H1 (cell line): ENCODE measurements at regions of chr1 and their contacts with region 1.

Region 1: DNA sequence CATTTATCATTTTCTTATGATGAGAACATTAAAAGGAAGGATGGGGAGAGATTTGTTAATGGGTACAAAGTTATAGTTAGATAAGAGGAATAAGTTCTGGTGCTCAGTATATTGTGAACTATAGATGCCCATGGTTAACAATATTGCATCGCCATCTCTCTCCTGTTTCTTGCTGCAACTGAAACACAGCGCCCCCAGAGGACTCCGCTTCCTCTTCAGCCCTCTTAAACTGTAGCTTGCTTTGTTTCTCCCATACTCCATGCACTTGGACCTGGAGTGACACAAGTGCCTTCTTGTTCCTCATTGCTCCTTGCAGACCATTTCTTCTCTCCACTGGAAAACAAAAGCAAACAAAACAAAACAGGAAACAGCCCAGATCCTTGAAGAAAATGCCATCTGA is 70.1 kb upstream of the NTPCR start:
- DNase-seq: peak; percentile 25 to 65
- H3K4me3 ChIP-seq: no peak overlapping the region
- H3K27ac ChIP-seq: no peak overlapping the region
- H3K4me1 ChIP-seq: no peaks in the 10 kb centered on the region
- H3K27me3 ChIP-seq: no peaks in the 10 kb centered on the region; a peak in 1 of 7 replicates
- CTCF ChIP-seq: peak; percentile 63 to 89 (median 70)
- EP300 ChIP-seq: no peak
- POLR2A ChIP-seq: no peak
- RAD21 ChIP-seq: peak; percentile 50 to 61

Region 2: DNA sequence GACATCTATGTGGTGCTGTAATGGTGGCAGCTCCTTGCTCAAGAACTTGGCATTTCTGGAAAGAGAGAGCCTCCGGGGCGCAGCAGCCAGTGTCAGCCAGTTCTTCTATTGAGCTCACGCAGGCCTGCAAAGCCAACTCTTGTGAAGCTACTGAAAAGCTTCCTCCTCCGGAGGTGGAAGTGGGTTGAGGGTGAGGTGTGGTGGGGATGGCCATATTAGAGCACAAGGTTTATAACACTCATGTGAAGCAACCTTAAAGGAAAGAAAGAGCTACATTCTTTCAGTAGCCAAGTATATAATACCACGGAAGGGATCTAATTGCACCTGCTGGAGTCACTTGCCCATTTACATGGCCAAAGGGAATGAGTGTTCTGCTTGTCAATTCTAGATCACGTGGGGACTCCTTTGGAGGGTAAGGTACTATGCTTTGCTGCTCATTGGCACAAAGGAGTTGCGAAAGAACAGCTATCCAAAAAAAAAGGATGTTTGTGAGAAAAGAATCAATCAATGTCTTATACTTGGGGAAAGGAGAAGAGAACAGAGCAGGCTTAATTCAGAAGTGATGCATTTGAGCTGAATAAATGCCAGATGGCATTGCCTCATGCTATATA is 93.4 kb before region 1 on chr1:
- CTCF ChIA-PET with region 1: no interaction called
- POLR2A ChIA-PET with region 1: no interaction called
- DNase-seq: no peak
- H3K4me3 ChIP-seq: no peak overlapping the region
- H3K27ac ChIP-seq: no peak overlapping the region
- H3K4me1 ChIP-seq: no peaks in the 10 kb centered on the region
- H3K27me3 ChIP-seq: no peaks in the 10 kb centered on the region
- CTCF ChIP-seq: no peak
- EP300 ChIP-seq: no peak
- POLR2A ChIP-seq: no peak
- RAD21 ChIP-seq: no peak

Region 3: DNA sequence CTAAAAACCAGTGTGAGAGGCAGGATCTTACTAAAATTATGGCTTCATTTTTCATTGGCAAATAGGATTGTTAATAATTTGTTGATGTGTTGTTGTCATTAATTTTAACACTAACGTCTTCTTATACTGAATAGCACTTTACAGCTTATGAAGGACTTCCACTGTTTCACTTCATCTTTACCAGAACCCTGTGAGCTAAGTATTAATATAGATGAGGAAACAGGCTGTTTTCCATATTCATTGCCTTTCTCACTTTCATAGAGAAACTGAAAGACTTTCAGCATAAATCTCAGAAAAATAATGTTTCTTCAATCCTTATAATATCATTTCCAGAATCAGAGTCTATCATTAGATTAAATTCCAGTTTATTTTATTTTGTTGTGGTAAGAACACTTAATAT is 66.6 kb before region 1 on chr1:
- CTCF ChIA-PET with region 1: interaction called, 12 read pairs
- POLR2A ChIA-PET with region 1: no interaction called
- DNase-seq: no peak
- H3K4me3 ChIP-seq: no peak overlapping the region
- H3K27ac ChIP-seq: no peak overlapping the region
- H3K4me1 ChIP-seq: no peaks in the 10 kb centered on the region
- H3K27me3 ChIP-seq: no peaks in the 10 kb centered on the region
- CTCF ChIP-seq: no peak
- EP300 ChIP-seq: no peak
- POLR2A ChIP-seq: no peak
- RAD21 ChIP-seq: no peak

Region 4: DNA sequence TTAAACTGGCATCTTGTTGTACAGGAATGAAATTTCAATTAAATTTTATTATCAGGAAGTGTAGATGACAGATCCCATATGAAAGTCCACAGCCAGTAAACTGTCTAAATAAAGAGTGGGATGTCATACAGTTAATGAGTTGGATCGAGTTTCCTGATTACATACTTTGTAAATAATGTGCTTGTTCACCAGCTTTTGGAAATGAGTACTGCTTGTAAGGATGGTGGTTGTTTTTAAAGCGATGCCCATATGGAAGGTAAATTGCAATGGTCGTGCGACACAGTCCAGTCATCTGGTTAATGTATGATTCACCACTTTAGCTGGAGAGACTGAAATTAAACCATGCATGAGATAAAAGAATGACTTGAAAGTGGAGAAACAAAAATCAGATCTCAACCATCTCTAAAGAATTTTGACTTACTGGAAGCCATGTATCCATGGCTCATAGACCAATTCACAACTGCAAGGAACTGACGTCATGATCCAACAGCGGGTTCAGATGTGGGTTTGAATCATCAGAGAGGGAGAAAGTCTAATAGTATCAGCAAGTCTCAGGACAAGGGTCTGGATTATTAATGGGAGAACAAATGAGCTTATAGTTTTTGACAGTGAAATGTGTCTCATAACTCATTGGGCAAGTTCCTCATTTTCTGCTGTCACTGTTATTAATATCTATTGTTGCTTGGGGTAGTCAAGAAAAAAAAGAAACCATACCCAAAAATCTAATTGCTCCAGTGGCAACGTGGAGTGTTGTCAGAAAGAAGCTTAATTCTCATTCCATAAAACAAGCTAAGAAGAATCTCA is 26.2 kb before region 1 on chr1:
- CTCF ChIA-PET with region 1: interaction called, 24 read pairs
- POLR2A ChIA-PET with region 1: no interaction called
- DNase-seq: no peak
- H3K4me3 ChIP-seq: no peak overlapping the region
- H3K27ac ChIP-seq: no peak overlapping the region
- H3K4me1 ChIP-seq: no peaks in the 10 kb centered on the region
- H3K27me3 ChIP-seq: peaks cover 0 to 1% (median 0%) of the 10 kb centered on the region in 4 experiments; a peak in 1 of 7 replicates
- CTCF ChIP-seq: no peak
- EP300 ChIP-seq: no peak
- POLR2A ChIP-seq: no peak
- RAD21 ChIP-seq: no peak

Region 5: DNA sequence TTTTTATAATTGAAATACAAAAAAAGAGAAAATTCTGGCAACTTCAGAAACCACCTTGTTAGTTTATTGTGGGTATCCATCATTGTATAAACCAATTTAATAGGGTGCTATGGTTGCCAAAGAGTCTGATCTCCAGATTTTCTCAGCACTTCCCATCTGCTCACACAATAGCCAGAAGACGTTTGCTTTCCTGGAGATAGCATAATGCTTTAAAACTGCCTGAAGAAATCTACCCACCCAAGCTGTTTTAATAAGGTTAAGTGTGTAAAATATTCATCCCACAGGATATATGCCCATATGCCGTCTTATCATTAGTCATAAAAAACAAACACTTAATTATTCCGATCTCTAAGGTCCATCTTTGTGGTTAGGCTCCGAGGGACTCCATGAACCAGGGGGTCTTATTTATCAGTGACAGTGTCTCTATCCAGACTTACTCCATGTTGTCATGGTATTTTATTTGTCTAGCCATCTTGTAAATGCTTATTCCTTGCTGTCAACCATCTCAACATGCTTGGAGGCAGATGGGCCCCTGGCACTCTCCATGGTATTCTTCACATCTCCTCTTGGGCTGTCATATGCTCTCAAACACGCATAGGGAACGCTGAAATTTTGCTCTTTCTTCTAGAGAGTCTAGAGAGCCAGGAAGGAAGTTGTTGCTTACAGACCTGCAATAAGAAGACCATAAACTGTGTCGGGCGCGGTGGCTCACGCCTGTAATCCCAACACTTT is 16.6 kb before region 1 on chr1:
- CTCF ChIA-PET with region 1: interaction called, 24 read pairs
- POLR2A ChIA-PET with region 1: no interaction called
- DNase-seq: no peak
- H3K4me3 ChIP-seq: no peak overlapping the region
- H3K27ac ChIP-seq: no peak overlapping the region
- H3K4me1 ChIP-seq: no peaks in the 10 kb centered on the region
- H3K27me3 ChIP-seq: no peaks in the 10 kb centered on the region
- CTCF ChIP-seq: no peak
- EP300 ChIP-seq: no peak
- POLR2A ChIP-seq: no peak
- RAD21 ChIP-seq: no peak

Region 6: DNA sequence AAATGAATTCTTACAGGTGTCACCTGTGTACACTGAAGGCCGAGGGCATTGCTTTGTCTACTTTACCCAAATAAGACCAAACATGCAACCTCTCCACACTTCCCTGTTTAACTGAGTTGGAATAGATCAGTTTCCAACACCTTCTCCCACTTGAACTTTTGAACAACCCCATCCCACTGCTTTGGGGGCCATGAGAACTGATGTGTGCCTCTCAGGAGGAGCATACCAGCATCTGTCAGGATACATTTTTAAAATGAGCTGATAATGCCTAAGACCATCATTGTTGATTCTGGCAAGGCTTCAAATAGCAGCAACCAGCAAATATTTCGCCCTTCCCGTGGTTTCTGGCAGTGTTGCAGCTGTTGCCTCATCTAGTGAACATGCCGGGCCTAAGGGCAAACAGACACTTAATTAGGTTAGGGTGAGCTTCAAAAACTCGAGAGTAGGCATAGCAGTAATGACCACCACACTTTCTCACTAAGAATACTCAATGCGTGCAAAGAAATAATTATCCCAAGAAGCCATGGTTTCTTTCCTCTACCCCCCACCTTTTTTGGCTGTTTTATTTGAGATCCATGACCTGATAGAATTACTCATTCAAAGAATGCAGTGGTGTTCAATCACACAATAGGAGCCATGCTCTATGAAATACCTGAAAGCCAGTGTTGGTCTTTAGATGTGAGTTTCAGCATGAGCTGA is 11.4 kb before region 1 on chr1:
- CTCF ChIA-PET with region 1: interaction called, 10 read pairs
- POLR2A ChIA-PET with region 1: no interaction called
- DNase-seq: no peak
- H3K4me3 ChIP-seq: no peak overlapping the region
- H3K27ac ChIP-seq: no peak overlapping the region
- H3K4me1 ChIP-seq: no peaks in the 10 kb centered on the region
- H3K27me3 ChIP-seq: no peaks in the 10 kb centered on the region
- CTCF ChIP-seq: no peak
- EP300 ChIP-seq: no peak
- POLR2A ChIP-seq: peak; percentile 30 to 53
- RAD21 ChIP-seq: no peak

Region 7: DNA sequence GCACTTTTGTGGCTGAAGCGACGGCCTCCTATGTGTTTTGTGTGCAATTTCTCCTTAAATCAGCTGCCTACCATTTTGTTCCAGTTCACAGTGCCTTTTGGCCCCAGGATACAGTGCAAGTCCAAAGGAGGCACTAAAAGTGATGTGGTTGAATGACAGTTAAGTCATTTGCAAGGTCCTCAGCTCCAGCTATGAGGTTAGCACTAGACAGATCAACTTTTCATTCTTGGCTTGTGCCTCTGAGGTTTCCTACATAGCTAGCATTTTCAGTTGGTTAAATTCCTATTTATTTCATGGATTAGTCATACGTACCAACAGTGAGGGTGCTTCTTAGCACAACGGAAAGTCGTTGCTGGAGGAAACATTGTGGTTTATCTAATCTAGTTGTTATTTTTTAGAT is 10.7 kb after region 1 on chr1:
- CTCF ChIA-PET with region 1: interaction called, 47 read pairs
- POLR2A ChIA-PET with region 1: no interaction called
- DNase-seq: no peak
- H3K4me3 ChIP-seq: no peak overlapping the region
- H3K27ac ChIP-seq: no peak overlapping the region
- H3K4me1 ChIP-seq: no peaks in the 10 kb centered on the region
- H3K27me3 ChIP-seq: no peaks in the 10 kb centered on the region
- CTCF ChIP-seq: no peak
- EP300 ChIP-seq: no peak
- POLR2A ChIP-seq: no peak
- RAD21 ChIP-seq: no peak

Region 8: GRCh38 chr1:232911027-232911599 is 30.8 kb after region 1 on chr1:
- CTCF ChIA-PET with region 1: interaction called, 10 read pairs
- POLR2A ChIA-PET with region 1: no interaction called
- DNase-seq: no peak
- H3K4me3 ChIP-seq: peak overlapping the region in 1 of 4 experiments; percentile 15; a peak in 1 of 8 replicates
- H3K27ac ChIP-seq: no peak overlapping the region
- H3K4me1 ChIP-seq: peaks cover 0 to 10% (median under 1%) of the 10 kb centered on the region in 4 experiments; a peak in 4 of 7 replicates
- H3K27me3 ChIP-seq: no peaks in the 10 kb centered on the region
- CTCF ChIP-seq: no peak
- EP300 ChIP-seq: no peak
- POLR2A ChIP-seq: no peak
- RAD21 ChIP-seq: no peak

Region 9: GRCh38 chr1:233015965-233016364 is 135.6 kb after region 1 on chr1:
- CTCF ChIA-PET with region 1: no interaction called
- POLR2A ChIA-PET with region 1: no interaction called
- DNase-seq: no peak
- H3K4me3 ChIP-seq: no peak overlapping the region
- H3K27ac ChIP-seq: no peak overlapping the region
- H3K4me1 ChIP-seq: no peaks in the 10 kb centered on the region
- H3K27me3 ChIP-seq: no peaks in the 10 kb centered on the region
- CTCF ChIP-seq: no peak
- EP300 ChIP-seq: no peak
- POLR2A ChIP-seq: no peak
- RAD21 ChIP-seq: no peak